Posterior vena cava (tissue), 2 donors: ENCODE measurements at regions of chr9 and their contacts with region 1.

Region 1: GRCh38 chr9:714675-715074 is 126.8 kb upstream of the DMRT1 start:
- DNase-seq: no peak

Region 2: DNA sequence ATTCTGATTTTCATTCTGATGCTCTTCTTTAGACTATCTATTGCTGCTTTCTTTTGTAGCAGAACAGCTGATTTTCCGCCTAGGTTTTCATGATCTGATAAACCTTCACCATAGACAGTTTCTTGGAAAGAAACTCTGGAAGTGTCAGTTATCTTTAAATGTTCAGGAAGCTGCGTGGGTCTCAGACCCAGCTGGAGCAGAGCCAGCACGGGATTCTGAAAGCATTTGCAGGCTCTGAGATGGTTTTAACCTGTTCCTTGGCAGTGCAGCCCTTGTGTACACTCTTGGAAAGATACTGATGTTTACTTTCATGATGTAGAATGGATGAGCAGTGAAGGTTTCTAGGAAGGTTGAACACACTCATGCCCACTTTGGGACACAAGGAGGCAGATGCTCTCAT is 51.1 kb before region 1 on chr9:
- intact Hi-C with region 1: no loop called
- DNase-seq: no peak

Region 3: GRCh38 chr9:749716-750115 is 35.0 kb after region 1 on chr9:
- intact Hi-C with region 1: loop called in 1 of 2 experiments (anchors 5 kb)
- DNase-seq: no peak